ENCODE measurements at regions of chr10 and their contacts with region 1.

Region 1: GRCh38 chr10:49592726-49593563 is 17.2 kb upstream of the SLC18A3 start:
- DNase-seq: peak in 1 of 2 experiments; percentile 86
- H3K4me3 ChIP-seq: no peak overlapping the region
- H3K27ac ChIP-seq: no peak overlapping the region
- H3K4me1 ChIP-seq: peaks cover 0 to 4% (median under 1%) of the 10 kb centered on the region in 4 experiments; a peak in 2 of 7 replicates
- H3K27me3 ChIP-seq: peaks cover 0 to 7% (median 0%) of the 10 kb centered on the region in 4 experiments; a peak in 3 of 7 replicates
- CTCF ChIP-seq: peak; percentile 84 to 96 (median 89)
- EP300 ChIP-seq: no peak
- POLR2A ChIP-seq: no peak
- RAD21 ChIP-seq: peak; percentile 50 to 66

Region 2: GRCh38 chr10:49606981-49607535 is 14.1 kb after region 1 on chr10:
- CTCF ChIA-PET with region 1: interaction called, 30 read pairs
- POLR2A ChIA-PET with region 1: interaction called, 5 read pairs
- DNase-seq: peak in 1 of 2 experiments; percentile 95
- H3K4me3 ChIP-seq: no peak overlapping the region
- H3K27ac ChIP-seq: no peak overlapping the region
- H3K4me1 ChIP-seq: peaks cover 0 to 27% (median 19%) of the 10 kb centered on the region in 4 experiments; a peak in 5 of 7 replicates
- H3K27me3 ChIP-seq: peaks cover 52 to 69% (median 64%) of the 10 kb centered on the region in 4 experiments
- CTCF ChIP-seq: no peak
- EP300 ChIP-seq: no peak
- POLR2A ChIP-seq: no peak
- RAD21 ChIP-seq: peak in 1 of 2 experiments; percentile 21; a peak in 1 of 4 replicates

Region 3: GRCh38 chr10:49614242-49615198 is 21.6 kb after region 1 on chr10:
- CTCF ChIA-PET with region 1: interaction called, 32 read pairs
- POLR2A ChIA-PET with region 1: no interaction called
- DNase-seq: peak in 1 of 2 experiments; percentile 52
- H3K4me3 ChIP-seq: peak overlapping the region in 2 of 4 experiments; percentile 3 to 72; a peak in 5 of 8 replicates
- H3K27ac ChIP-seq: no peak overlapping the region
- H3K4me1 ChIP-seq: peaks cover 0 to 35% (median 24%) of the 10 kb centered on the region in 4 experiments; a peak in 6 of 7 replicates
- H3K27me3 ChIP-seq: peaks cover 67 to 85% (median 81%) of the 10 kb centered on the region in 4 experiments
- CTCF ChIP-seq: no peak
- EP300 ChIP-seq: no peak
- POLR2A ChIP-seq: no peak
- RAD21 ChIP-seq: no peak

Region 4: DNA sequence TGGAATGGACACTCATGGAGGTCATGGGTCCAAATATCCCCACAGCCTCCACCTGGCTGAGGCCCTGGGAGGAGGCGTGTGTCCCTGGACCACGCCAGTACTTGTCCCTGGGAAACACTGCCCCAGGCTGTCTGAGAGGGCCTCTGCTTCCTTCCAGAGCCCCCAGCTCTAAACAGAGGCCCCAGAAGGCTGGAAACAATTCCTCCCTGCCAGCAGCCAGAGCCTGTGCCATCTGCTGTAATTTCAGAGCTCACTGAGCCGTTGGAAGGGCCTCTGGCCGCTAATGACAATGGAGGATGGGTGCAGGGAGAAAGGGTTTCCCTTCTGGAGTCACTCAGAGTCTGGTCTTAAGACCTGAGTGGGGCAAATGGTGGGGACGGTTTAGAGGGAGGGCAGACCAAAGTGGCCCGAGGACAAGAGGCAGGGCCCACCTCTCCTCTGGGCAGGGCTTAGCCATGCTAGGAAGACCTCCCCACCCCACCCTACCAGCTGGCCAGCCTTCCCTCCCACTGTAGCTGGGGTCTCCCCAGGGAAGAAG is 28.0 kb after region 1 on chr10:
- CTCF ChIA-PET with region 1: interaction called, 32 read pairs
- POLR2A ChIA-PET with region 1: no interaction called
- DNase-seq: no peak
- H3K4me3 ChIP-seq: no peak overlapping the region
- H3K27ac ChIP-seq: no peak overlapping the region
- H3K4me1 ChIP-seq: no peaks in the 10 kb centered on the region
- H3K27me3 ChIP-seq: peaks cover 4 to 29% (median 22%) of the 10 kb centered on the region in 4 experiments
- CTCF ChIP-seq: no peak
- EP300 ChIP-seq: no peak
- POLR2A ChIP-seq: no peak
- RAD21 ChIP-seq: no peak

Region 5: GRCh38 chr10:49690698-49691356 is 97.9 kb after region 1 on chr10:
- CTCF ChIA-PET with region 1: interaction called, 10 read pairs
- POLR2A ChIA-PET with region 1: interaction called, 3 read pairs
- DNase-seq: no peak
- H3K4me3 ChIP-seq: peak overlapping the region in 1 of 4 experiments; percentile 51; a peak in 4 of 8 replicates
- H3K27ac ChIP-seq: no peak overlapping the region
- H3K4me1 ChIP-seq: peaks cover 22 to 36% (median 25%) of the 10 kb centered on the region in 4 experiments
- H3K27me3 ChIP-seq: peaks cover 52 to 69% (median 66%) of the 10 kb centered on the region in 4 experiments
- CTCF ChIP-seq: no peak
- EP300 ChIP-seq: no peak
- POLR2A ChIP-seq: no peak
- RAD21 ChIP-seq: no peak

Region 6: DNA sequence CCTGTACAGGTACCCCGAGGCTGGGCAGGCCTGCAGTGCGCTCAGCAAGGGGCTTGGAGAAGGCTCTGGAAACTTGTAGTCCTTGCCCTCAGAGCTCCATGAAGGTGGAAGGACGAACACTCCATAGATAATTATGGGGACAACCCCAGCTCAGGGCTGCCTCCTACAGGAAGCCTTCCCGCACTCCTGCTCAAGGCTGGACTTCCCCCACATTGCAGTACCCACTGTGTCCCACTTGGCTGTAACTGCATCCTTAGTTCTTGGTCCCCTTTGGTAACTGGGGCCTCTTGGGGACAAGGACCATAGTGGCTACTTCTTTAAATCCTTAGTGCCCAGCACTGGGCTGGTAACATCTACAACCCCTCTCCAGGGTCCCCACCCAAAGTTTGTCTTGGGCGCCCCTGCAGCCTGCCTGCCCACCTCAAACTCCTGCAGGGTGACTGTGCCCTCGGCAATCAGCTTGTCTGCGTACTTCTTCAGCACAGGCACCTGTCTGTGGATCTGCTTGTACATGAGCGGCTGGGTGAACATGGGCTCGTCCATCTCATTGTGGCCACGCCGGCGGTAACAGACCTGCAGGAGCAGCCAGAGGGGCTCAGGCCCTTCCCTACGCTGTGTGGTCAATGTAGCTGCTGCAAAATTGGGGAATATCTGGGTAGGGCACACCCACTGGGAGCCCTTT is 152.1 kb after region 1 on chr10:
- CTCF ChIA-PET with region 1: interaction called, 36 read pairs
- POLR2A ChIA-PET with region 1: no interaction called
- DNase-seq: no peak
- H3K4me3 ChIP-seq: no peak overlapping the region
- H3K27ac ChIP-seq: no peak overlapping the region
- H3K4me1 ChIP-seq: no peaks in the 10 kb centered on the region
- H3K27me3 ChIP-seq: no peaks in the 10 kb centered on the region
- CTCF ChIP-seq: peak; percentile 74 to 88 (median 82)
- EP300 ChIP-seq: no peak
- POLR2A ChIP-seq: no peak
- RAD21 ChIP-seq: peak; percentile 60 to 68

Region 7: DNA sequence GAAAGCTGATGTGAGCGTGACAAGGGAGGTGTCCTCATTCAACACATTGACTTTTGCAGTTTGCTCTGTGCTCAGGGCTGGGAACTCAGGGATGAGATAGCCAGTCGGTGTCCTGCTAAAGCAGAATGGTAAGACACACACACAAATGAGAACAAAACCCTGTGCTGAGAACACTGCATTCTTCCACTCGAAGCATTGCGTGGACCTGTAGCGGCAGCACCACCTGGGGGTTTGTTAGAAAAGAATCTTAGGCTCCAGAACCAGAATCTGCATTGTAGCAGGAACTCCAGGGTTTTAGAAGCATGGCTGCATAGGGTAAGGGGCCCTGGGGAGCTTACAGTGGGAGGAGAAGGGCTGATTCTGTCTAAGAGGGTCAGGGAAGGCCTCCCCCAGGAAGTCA is 190.7 kb after region 1 on chr10:
- CTCF ChIA-PET with region 1: interaction called, 15 read pairs
- POLR2A ChIA-PET with region 1: no interaction called
- DNase-seq: no peak
- H3K4me3 ChIP-seq: peak overlapping the region in 1 of 4 experiments; percentile 4; a peak in 1 of 8 replicates
- H3K27ac ChIP-seq: no peak overlapping the region
- H3K4me1 ChIP-seq: peaks cover 0 to 4% (median 3%) of the 10 kb centered on the region in 4 experiments; a peak in 2 of 7 replicates
- H3K27me3 ChIP-seq: no peaks in the 10 kb centered on the region
- CTCF ChIP-seq: peak in 1 of 3 experiments; percentile 17; a peak in 1 of 4 replicates
- EP300 ChIP-seq: no peak
- POLR2A ChIP-seq: no peak
- RAD21 ChIP-seq: peak; percentile 26 to 37; a peak in 2 of 4 replicates